ENCODE measurements at regions of chr1 and their contacts with region 1.

Region 1: DNA sequence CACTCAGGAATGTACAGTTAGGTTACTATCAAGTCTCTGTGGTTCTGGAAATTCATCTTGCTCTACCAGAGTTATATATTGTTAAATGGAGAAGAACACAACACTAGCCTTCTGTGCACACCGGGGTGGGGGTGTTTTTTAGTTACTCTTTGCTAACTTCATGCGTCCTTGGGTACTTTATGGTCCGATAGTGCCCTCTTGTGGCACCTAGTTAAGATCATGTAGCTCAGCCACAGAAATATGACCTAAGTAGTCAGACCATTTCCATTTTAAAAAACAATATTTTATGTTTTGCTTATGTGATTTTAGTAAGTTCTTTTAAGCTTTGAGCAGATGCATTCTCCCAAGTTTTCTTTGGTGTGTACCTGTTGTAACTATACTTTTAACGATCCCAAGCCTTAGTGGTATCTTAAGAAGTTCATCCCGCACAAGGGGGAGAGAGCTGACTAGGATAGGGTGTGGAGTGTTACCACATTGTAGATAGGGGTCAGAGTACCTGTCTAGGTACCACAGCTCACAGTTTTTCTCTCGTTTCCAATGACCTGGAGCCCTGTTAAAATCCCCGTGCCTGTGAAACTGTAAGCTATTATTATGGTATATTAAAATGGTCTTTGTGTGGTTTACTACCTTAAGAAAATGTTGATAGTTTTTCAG is 20.6 kb upstream of the SH3D21 start:
- DNase-seq: no peak
- H3K4me3 ChIP-seq: peak overlapping the region; percentile 4
- H3K27ac ChIP-seq: peak overlapping the region; percentile 73
- H3K4me1 ChIP-seq: peaks cover 93% of the 10 kb centered on the region
- H3K27me3 ChIP-seq: no peaks in the 10 kb centered on the region
- CTCF ChIP-seq: peak; percentile 85

Region 2: DNA sequence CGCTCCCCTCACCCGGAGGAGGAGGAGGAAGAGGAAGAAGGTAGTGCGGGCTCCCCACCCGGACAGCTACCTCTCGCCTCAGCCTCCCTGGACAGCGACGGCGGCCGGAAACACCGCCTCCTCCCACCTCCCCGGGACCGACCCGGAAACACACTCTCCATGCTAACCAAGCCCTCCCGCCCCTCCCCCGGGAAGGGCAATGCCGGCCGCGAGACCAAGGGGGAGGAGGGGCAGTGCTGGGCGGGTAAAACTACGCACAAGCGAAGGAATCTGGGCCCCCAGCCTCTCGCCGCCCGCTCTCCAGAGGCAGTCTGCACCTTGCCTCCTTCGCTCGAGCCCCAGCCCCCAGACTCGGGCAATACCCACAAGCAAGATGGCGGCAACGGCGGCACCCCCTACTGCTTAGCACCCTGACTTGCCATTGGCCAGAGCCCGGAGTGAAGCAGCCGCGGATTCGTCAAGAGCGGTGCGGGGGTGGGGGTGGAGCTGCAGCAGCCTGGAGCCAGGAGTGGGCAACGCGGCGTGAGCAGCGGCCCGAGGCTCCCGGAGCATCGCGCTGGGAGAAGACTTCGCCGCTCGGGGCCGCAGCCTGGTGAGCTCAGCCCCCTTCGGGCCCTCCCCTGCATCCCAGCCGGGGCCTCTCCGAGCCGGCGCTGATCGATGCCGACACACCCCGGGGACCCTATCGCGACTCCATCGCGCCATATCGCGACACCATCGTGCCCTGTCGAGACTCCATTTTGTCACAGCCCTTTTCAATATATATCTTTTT is 728.1 kb before region 1 on chr1 and contains the starts of genes KIAA0319L and NCDN:
- intact Hi-C with region 1: no loop called
- DNase-seq: peak; percentile 98
- H3K4me3 ChIP-seq: peak within 1 kb of the TSS; percentile 85
- H3K27ac ChIP-seq: peak within 1 kb of the TSS; percentile 99
- H3K4me1 ChIP-seq: peaks cover 88% of the 10 kb centered on the region
- H3K27me3 ChIP-seq: no peaks in the 10 kb centered on the region
- CTCF ChIP-seq: no peak
- total RNA-seq, gene KIAA0319L: 64.3 TPM
- total RNA-seq, gene NCDN: 26.1 TPM

Region 3: DNA sequence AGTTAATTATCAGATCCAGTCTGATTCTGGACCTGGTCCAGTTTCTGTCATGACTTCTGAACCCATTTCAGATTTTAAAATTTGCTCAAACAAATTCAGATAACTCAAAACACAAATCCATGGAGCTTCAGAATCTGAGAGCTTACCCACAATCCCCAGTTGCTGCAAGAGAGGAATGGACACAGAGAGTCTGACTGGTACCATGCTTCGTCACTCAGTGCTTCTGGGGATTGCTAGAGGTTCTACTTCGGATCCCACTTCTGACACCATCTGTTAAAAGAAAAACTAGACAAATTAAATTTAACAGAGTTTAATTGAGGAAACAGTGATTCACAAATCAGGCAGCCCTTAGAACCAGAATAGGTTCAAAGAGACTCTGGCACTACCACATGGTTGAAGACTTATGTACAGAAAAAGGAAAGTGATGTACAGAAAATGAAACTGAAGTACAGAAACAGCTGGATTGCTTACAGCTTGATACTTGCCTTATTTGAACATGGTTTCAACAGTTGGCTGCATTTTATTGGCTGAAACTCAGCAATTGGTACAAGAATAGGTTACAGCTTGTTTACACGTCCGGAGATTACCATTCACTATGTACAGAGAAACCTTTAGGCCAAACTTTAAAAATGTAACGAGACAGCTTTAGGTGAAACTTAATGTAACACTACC is 262.3 kb before region 1 on chr1:
- intact Hi-C with region 1: no loop called
- DNase-seq: no peak
- H3K4me3 ChIP-seq: no peak overlapping the region
- H3K27ac ChIP-seq: no peak overlapping the region
- H3K4me1 ChIP-seq: no peaks in the 10 kb centered on the region
- H3K27me3 ChIP-seq: no peaks in the 10 kb centered on the region
- CTCF ChIP-seq: no peak

Region 4: DNA sequence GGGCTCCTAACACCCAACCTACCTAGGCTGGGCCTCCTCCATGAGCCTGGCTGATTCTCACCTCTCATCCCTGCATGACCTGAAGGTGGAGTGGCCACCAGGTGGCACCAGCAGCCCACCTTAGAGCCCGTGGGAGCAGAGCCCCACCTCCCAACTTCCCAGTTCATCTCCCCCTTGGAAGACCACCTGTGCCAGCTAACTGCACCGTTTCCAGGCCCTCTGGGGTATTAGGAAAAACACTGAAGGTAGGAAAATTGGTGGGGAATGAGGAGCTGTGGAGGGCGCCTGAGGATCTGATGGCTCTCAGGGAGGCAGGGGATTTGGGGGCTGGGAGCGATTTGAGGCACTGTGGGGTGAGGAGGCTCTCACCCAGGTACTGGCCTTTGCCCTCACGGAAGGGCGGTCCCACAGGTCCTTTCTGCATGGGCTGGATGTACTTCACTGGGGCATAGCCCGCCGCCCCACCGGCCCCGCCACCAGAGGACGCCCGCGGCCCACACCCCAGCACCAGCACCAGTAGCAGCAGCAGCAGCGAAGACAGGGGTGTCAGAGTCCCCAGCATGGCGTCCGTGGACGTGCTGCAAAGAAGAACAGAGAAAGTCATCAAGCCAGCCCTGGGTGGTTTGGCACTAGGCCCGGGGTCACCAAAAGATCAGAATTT is 185.8 kb before region 1 on chr1:
- intact Hi-C with region 1: loop called (anchors 10 kb)
- DNase-seq: peak; percentile 74
- H3K4me3 ChIP-seq: peak overlapping the region; percentile 21
- H3K27ac ChIP-seq: no peak overlapping the region
- H3K4me1 ChIP-seq: peaks cover 18% of the 10 kb centered on the region
- H3K27me3 ChIP-seq: no peaks in the 10 kb centered on the region
- CTCF ChIP-seq: peak; percentile 86

Region 5: GRCh38 chr1:36149237-36149972 is 136.2 kb before region 1 on chr1 and contains the start of gene TRAPPC3:
- intact Hi-C with region 1: loop called (anchors 10 kb)
- DNase-seq: peak; percentile 100
- H3K4me3 ChIP-seq: peak within 1 kb of the TSS; percentile 97
- H3K27ac ChIP-seq: peak within 1 kb of the TSS; percentile 100
- H3K4me1 ChIP-seq: peaks cover 65% of the 10 kb centered on the region
- H3K27me3 ChIP-seq: no peaks in the 10 kb centered on the region
- CTCF ChIP-seq: peak; percentile 98
- total RNA-seq, gene TRAPPC3: 54.6 TPM

Region 6: DNA sequence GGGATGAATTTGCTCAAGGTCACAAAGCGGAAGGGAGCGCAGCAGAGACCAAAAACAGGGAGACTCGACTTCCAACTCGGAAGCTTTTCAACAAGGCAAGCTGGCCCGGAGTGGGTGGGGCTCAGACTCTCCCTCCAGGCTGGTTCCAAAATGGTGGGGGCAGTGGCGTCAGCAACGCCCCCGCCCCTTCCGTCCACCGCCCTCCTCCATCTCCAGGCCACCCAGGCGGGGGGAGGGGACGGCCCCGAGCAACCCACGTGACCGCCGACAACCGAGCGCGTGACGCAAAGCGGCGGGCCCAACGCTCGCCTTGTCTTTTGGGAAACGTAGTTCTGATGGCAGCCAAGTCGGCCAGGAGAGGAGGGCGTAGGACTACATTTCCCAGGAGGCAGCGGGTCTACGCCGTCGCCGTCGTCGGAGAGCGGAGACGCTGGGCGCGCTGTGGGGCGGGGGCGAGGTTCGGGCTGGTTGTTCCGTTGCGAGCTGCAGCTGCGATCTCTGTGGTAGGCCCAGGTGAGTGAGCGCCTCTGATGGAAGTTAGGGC is 61.5 kb before region 1 on chr1 and contains the start of gene THRAP3:
- intact Hi-C with region 1: loop called (anchors 10 kb)
- DNase-seq: peak; percentile 100
- H3K4me3 ChIP-seq: peak within 1 kb of the TSS; percentile 79
- H3K27ac ChIP-seq: peak within 1 kb of the TSS; percentile 98
- H3K4me1 ChIP-seq: peaks cover 58% of the 10 kb centered on the region
- H3K27me3 ChIP-seq: no peaks in the 10 kb centered on the region
- CTCF ChIP-seq: no peak
- total RNA-seq, gene THRAP3: 59.0 TPM

Region 7: GRCh38 chr1:36400825-36401601 is 115.4 kb after region 1 on chr1:
- intact Hi-C with region 1: no loop called
- DNase-seq: peak; percentile 73
- H3K4me3 ChIP-seq: peak overlapping the region; percentile 38
- H3K27ac ChIP-seq: peak overlapping the region; percentile 38
- H3K4me1 ChIP-seq: peaks cover 23% of the 10 kb centered on the region
- H3K27me3 ChIP-seq: no peaks in the 10 kb centered on the region
- CTCF ChIP-seq: no peak

Region 8: DNA sequence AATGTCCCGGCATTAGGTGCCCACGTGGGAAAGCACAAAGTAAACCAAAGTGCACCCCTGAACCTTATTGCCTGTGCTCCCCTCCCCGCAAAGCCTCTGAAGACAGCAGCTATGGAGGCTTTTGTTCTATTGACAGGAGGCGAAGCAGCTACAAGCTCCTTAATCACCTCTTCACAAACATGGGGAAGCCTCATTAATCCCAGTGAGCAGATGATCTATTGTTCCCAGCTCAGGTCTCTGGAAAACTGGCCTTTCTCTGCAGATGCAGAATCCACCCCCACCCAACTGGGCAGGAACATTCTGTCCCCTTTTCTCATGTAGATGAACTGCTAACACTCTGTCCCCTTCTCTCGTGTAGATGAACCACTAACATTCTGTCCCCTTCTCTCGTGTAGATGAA is 387.6 kb after region 1 on chr1:
- intact Hi-C with region 1: no loop called
- DNase-seq: no peak
- H3K4me3 ChIP-seq: no peak overlapping the region
- H3K27ac ChIP-seq: no peak overlapping the region
- H3K4me1 ChIP-seq: no peaks in the 10 kb centered on the region
- H3K27me3 ChIP-seq: peaks cover 96% of the 10 kb centered on the region
- CTCF ChIP-seq: no peak

Measured in left ventricle myocardium inferior (tissue), 1 donor.